IMR-90 (cell line): ENCODE measurements at regions of chr6 and their contacts with region 1.

Region 1: DNA sequence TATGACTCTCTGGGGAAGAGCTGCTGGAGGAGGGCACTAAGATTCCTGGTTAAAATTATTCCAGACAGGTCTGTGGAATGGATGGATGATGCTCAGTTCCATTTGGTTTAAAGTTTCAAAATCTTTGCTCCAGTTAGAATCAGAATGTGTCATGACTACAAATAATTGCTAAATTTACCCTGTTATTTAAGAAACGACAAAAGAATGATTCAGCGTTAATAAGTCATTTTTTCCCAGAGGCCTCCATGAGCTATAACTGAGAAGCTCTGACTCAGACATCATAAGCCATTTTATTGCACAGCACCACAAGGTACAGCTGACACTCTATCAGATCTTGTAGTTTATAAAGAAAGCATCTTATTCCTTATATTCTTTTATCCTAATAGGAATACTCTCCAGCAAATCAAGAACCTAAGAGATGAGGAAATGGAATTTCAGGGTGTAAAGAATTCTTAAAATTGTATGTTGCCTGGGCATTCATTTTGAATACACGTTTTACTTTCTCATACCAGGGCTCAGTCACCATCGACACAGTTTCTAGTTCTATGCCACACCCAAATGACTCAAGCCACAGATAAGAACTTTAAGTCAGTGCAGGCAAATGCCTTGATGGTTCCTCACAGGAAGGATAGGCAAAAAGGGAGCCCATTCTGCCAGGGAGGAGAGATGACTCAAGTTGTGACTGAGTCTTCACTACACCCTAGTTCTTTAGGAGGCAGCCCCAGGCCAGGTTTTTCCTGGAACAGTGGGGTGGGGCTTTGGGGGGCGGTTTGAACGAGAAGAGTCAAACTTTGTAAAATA is 636.0 kb downstream of the MMUT start:
- DNase-seq: peak; percentile 97
- ATAC-seq: peak; percentile 89
- H3K4me3 ChIP-seq: no peak overlapping the region
- H3K27ac ChIP-seq: peak overlapping the region; percentile 48
- H3K4me1 ChIP-seq: peaks cover 5% of the 10 kb centered on the region
- H3K27me3 ChIP-seq: no peaks in the 10 kb centered on the region
- CTCF ChIP-seq: no peak
- POLR2A ChIP-seq: no peak; the same call in 1 of the 2 replicates
- RAD21 ChIP-seq: peak; percentile 5; the same call in 1 of the 2 replicates

Region 2: GRCh38 chr6:48978016-48978415 is 150.9 kb after region 1 on chr6:
- CTCF ChIA-PET with region 1: no interaction called
- POLR2A ChIA-PET with region 1: no interaction called
- dilution Hi-C with region 1: no loop called
- in situ Hi-C with region 1: no loop called
- intact Hi-C with region 1: loop called (anchors 5 kb)
- DNase-seq: peak; percentile 78
- ATAC-seq: peak; percentile 97
- H3K4me3 ChIP-seq: no peak overlapping the region
- H3K27ac ChIP-seq: no peak overlapping the region
- H3K4me1 ChIP-seq: peaks cover 1% of the 10 kb centered on the region; the same call in 1 of the 2 replicates
- H3K27me3 ChIP-seq: no peaks in the 10 kb centered on the region
- CTCF ChIP-seq: no peak
- POLR2A ChIP-seq: no peak
- RAD21 ChIP-seq: peak; percentile 9; the same call in 1 of the 2 replicates